Tibial artery (tissue), 4 donors: ENCODE measurements at regions of chr19 and their contacts with region 1.

Region 1: GRCh38 chr19:18408053-18408476 is 10.6 kb upstream of the LRRC25 start:
- DNase-seq: no peak
- H3K4me3 ChIP-seq: no peak overlapping the region
- H3K27ac ChIP-seq: no peak overlapping the region
- H3K4me1 ChIP-seq: peaks cover 0 to 6% (median 2%) of the 10 kb centered on the region in 4 donors
- H3K27me3 ChIP-seq: peaks cover 0 to 11% of the 10 kb centered on the region in 2 donors
- CTCF ChIP-seq: peak in 1 of 2 experiments; percentile 12

Region 2: GRCh38 chr19:18349524-18350128 is 58.4 kb before region 1 on chr19:
- intact Hi-C with region 1: loop called (anchors 5 kb)
- DNase-seq: peak in 1 of 2 donors; percentile 48
- H3K4me3 ChIP-seq: no peak overlapping the region
- H3K27ac ChIP-seq: no peak overlapping the region
- H3K4me1 ChIP-seq: no peaks in the 10 kb centered on the region
- H3K27me3 ChIP-seq: no peaks in the 10 kb centered on the region
- CTCF ChIP-seq: peak; percentile 64 to 69

Region 3: DNA sequence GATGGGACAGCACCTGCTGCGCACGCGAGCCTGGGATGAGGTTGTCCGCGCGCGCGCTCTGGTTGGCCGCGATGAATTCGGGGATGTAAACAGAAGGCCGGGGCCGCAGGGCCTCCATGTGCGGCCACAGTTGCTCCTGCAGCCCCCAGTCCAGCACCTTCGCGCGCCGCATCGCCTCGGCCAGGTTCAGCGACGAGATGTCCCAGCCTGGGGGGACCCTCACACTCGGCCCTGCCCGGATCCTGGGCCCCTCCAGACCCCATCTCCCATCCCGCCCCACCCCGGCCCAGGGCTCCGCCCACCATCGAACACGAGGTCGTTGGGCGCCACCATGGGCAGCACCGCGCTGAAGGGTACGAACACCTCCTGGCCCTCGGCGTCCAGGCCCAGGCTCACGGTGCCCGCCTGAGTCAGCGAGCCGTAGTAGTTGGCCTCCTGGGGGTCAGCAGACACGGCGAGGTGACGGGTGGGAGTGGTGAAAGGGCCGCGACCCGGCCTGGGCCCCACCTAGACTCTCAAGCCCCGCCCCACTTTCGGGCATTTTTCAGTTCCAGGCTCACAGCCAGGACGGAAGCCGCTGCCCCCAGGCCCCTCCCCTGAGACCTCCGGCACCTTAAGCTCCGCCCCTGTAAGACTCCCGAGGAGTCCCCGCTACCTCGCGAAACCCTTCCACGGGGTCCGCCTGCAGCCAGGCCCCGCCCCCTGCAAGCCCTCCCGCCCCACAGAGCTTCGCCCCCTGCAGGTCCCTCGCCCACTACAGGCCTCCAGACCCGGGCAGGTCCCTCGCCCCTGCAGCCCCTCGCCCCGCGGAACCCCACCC is 28.8 kb after region 1 on chr19:
- intact Hi-C with region 1: no loop called
- DNase-seq: peak; percentile 57 to 90
- H3K4me3 ChIP-seq: peak overlapping the region; percentile 58 to 65
- H3K27ac ChIP-seq: peak overlapping the region; percentile 66 to 76
- H3K4me1 ChIP-seq: peaks cover 0 to 54% (median 46%) of the 10 kb centered on the region in 4 donors
- H3K27me3 ChIP-seq: peaks cover 0 to 9% of the 10 kb centered on the region in 2 donors
- CTCF ChIP-seq: no peak